ENCODE measurements at regions of chr2 and their contacts with region 1.

Region 1: DNA sequence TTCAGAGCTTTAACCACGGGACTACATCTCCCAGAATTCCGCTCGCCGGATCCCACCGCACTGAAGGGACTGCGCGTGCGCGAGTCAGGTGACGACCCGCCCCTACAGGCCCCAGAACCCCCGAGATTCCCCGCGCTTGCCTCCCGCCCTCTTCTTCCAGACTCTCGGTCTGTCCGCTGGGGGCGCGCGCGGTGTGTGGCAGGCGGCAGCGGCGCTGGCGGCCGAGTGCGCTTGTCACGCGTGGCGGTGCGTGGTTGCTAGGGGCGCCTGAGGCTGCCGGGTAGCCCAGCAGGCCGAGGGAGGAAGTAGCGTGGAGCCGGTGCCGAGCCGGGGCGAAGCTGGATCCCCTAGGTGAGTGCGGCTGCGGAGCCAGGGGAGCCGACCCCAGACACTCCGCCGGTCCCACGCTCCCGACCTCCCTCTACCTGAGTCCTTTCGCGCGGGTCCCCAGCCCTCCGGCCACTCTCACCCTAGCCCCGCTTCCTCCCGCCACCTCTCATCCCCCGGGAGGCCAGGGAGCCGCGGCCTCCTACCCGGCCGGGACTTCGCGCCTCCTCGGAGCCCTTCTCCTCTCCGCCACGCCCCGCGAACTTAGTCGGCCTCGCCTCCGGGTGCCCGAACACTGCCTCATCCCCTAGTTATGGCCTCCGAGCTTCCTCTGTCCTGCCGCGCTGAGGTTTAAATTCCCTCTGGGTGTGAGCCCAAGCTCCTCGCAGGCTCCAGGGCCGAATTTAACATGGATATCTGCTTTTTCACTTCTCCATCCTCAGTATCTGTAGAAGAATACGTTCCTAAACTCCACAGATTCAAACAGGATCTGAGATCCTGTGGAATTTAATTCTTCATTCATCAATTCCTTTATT is at the start of gene TTLL4:
- DNase-seq: no peak
- H3K4me3 ChIP-seq: peak within 1 kb of the TSS; percentile 86
- CTCF ChIP-seq: peak; percentile 93

Region 2: GRCh38 chr2:218659258-218659987 is 51.5 kb before region 1 on chr2 and contains the starts of genes BCS1L and ZNF142:
- CTCF ChIA-PET with region 1: interaction called, 14 read pairs
- POLR2A ChIA-PET with region 1: interaction called, 3 read pairs
- DNase-seq: no peak
- H3K4me3 ChIP-seq: peak within 1 kb of the TSS; percentile 85
- CTCF ChIP-seq: no peak

Region 3: DNA sequence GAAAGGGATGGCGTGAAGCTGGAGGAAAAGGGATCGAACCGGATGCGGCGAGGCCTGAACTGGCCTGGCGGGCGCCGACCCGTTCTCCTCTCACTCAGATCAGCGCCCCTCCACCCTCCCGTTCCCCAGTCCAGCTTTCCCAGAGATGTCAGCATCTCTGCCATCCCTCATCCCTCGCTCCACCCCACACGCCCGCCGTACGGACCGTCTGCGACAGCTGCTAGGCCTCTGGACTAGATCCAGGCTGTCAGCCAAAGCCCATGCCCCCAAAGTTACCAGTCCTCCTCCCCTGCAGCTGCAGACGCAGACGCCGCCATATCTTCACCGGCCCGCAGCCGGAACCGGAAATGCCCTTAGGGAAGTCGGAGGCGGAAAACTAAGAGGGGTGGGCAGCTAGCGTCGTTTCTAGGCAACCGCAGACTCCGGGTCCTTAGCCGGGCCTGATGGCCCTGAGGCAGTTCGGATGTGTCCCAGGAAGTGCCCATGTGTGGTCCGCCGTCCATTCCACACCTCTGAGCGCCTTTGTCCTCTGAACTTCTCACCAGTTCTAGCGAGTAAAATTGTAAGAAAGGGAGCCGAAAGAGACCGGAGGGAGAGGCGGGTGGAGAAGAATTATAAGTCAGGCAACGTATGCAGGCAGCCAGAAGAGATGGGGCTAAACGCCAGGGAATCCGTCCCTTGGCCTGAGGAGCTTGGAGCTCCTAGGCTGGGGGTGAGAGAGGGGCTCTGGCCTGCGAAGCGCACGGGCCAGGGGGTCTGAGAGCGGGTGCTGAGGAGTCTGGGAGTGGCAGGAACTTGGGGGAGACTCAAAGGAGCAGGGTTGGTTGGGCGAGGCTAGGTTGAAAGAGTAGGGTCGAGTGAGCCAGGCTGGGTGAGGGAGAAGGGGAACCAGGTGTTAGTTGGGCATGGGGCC is 39.0 kb before region 1 on chr2 and contains the starts of genes RNF25 and STK36:
- CTCF ChIA-PET with region 1: interaction called, 10 read pairs
- POLR2A ChIA-PET with region 1: no interaction called
- DNase-seq: no peak
- H3K4me3 ChIP-seq: peak within 1 kb of the TSS; percentile 88
- CTCF ChIP-seq: no peak

Region 4: GRCh38 chr2:218691234-218691633 is 19.7 kb before region 1 on chr2:
- CTCF ChIA-PET with region 1: interaction called, 36 read pairs
- POLR2A ChIA-PET with region 1: interaction called, 4 read pairs
- DNase-seq: no peak
- H3K4me3 ChIP-seq: no peak overlapping the region
- CTCF ChIP-seq: no peak

Region 5: GRCh38 chr2:218727502-218728165 is 16.7 kb after region 1 on chr2:
- CTCF ChIA-PET with region 1: interaction called, 30 read pairs
- POLR2A ChIA-PET with region 1: no interaction called
- DNase-seq: no peak
- H3K4me3 ChIP-seq: no peak overlapping the region
- CTCF ChIP-seq: no peak

Region 6: DNA sequence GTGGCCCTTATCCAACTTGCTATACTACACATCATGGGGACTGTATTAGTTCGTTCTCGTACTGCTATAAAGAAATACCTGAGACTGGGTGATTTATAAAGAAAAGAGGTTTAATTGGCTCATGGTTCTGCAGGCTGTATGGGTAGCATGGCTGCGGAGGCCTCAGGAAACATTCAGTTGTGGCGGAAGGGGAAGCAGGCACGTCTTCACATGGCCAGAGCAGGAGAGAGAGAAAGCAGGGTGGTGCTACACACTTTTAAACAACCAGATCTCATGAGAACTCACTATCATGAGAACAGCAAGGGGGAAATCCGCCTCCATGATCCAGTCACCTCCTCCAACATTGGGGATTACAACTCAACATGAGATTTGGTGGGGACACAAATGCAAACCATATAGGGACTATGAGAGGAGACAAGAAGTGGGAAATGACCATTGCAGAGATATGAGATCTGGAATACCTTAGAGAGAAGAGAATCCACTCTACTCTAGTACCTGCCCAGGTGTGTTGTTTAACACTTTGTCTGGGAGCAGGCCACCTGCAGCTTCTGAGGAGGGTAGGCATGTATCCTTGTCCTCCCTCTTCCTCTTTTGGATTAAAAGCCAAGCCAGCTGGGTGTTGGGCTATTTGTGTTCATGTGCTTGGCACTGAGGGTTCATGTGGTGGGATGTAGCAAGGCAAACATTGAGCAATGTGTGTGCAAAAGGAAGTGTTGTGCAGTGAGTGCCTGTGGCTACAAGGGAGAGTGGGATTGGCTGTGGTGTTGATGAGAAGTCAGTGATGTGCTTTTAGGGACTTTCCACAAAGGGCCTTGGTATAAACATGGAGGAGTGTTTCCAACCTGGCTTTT is 22.5 kb after region 1 on chr2:
- CTCF ChIA-PET with region 1: interaction called, 28 read pairs
- POLR2A ChIA-PET with region 1: no interaction called
- DNase-seq: peak; percentile 36
- H3K4me3 ChIP-seq: no peak overlapping the region
- CTCF ChIP-seq: no peak

Region 7: DNA sequence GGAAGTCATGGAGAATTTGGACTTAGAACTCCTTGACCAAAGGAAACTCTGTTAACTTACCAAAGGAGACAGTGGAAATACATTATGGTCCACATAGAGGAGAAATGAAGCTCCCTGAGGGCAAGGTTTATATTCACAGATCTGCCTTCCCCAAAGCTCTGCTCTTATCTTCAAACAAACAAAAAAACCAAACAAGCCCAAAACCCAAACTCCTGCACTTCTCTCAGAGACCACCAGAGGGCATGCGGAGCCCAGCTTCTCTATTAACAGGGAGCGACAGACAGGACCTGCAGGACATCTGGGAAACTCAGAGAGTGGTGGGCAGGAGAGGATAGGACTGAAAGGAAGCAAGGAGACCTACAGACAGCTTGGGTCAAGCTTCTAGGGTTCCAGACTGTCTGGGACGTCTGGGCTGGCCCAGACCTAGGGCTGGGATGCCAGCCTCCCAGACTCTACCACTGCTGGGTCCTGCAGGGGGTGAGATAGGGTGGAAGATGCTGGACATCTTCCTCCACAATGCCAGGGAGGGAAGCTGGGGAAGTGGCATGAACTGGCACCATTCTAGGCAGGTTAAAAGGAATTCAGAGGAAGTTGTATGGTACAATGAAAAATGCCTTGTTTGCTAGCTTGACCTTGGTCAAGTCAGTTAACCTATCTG is 165.8 kb after region 1 on chr2:
- CTCF ChIA-PET with region 1: interaction called, 10 read pairs
- POLR2A ChIA-PET with region 1: no interaction called
- DNase-seq: no peak
- H3K4me3 ChIP-seq: no peak overlapping the region
- CTCF ChIP-seq: peak; percentile 86